Transverse colon (tissue), 4 donors: ENCODE measurements at regions of chr12 and their contacts with region 1.

Region 1: GRCh38 chr12:12813120-12814101 is at the start of gene DDX47:
- DNase-seq: peak; percentile 98
- H3K4me3 ChIP-seq: peak within 1 kb of the TSS; percentile 75 to 97 (median 88)
- H3K27ac ChIP-seq: peak within 1 kb of the TSS; percentile 75 to 88 (median 84)
- H3K4me1 ChIP-seq: peaks cover 7 to 37% (median 16%) of the 10 kb centered on the region in 4 donors
- H3K27me3 ChIP-seq: no peaks in the 10 kb centered on the region
- CTCF ChIP-seq: peak; percentile 92 to 99 (median 97)
- EP300 ChIP-seq: no peak
- POLR2A ChIP-seq: peak; percentile 46
- total RNA-seq, gene DDX47: 22.1 to 47.8 (median 31.8) TPM

Region 2: GRCh38 chr12:12673296-12673695 is 140.1 kb before region 1 on chr12:
- in situ Hi-C with region 1: no loop called
- intact Hi-C with region 1: no loop called
- DNase-seq: no peak
- H3K4me3 ChIP-seq: no peak overlapping the region
- H3K27ac ChIP-seq: no peak overlapping the region
- H3K4me1 ChIP-seq: no peaks in the 10 kb centered on the region
- H3K27me3 ChIP-seq: no peaks in the 10 kb centered on the region
- CTCF ChIP-seq: no peak
- EP300 ChIP-seq: no peak
- POLR2A ChIP-seq: no peak

Region 3: DNA sequence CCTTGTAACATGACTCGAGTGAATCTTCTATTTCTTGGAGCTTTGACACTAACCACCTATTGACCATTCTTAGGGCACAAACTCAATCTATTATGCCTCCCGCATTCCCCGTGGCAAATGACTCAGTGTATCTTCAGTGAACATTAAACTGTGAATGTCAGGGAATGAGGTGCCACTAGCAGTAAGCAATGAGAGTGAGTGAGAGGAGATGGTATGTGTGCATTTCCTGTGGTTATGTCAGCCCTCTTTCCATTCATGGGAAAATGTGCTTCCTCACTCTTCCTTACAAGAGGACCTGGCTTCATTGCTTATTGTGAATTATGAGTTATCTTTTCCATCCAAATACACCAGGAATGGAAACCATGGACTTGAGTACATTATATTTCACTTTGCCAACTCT is 612.4 kb after region 1 on chr12:
- in situ Hi-C with region 1: no loop called
- intact Hi-C with region 1: loop called (anchors 10 kb)
- DNase-seq: no peak
- H3K4me3 ChIP-seq: no peak overlapping the region
- H3K27ac ChIP-seq: no peak overlapping the region
- H3K4me1 ChIP-seq: no peaks in the 10 kb centered on the region
- H3K27me3 ChIP-seq: no peaks in the 10 kb centered on the region
- CTCF ChIP-seq: no peak
- EP300 ChIP-seq: no peak
- POLR2A ChIP-seq: no peak